Natural killer cell (primary cell): ENCODE measurements at regions of chr1 and their contacts with region 1.

Region 1: DNA sequence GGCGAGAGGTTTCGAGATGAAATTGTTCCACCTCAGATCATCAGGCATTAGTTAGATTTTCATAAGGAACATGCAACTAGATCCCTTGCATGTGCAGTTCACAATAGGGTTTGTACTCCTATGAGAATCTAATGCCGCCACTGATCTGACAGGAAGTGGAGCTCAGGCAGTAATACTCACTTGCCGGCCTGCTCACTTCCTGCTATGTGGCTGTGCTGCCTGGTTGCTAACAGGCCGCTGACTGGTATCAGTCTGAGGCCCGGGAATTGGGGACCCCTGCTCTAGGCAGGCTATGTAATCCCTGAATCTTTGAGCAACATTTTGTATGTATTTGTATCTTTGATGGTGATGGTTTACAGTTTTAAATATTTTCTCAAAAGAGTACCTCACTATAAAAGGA is 32.5 kb downstream of the XKR8 start:
- DNase-seq: peak; percentile 39 to 78
- ATAC-seq: peak; percentile 75 to 82 (median 79)
- H3K4me3 ChIP-seq: no peak overlapping the region
- H3K4me3 Mint-ChIP-seq: peak overlapping the region; percentile 82
- H3K27ac ChIP-seq: peak overlapping the region; percentile 81
- H3K27ac Mint-ChIP-seq: peak overlapping the region; percentile 88 to 96
- H3K4me1 ChIP-seq: peaks cover 21% of the 10 kb centered on the region
- H3K4me1 Mint-ChIP-seq: peaks cover 42 to 43% of the 10 kb centered on the region in 2 donors
- H3K27me3 ChIP-seq: no peaks in the 10 kb centered on the region
- H3K27me3 Mint-ChIP-seq: no peaks in the 10 kb centered on the region
- CTCF ChIP-seq: no peak

Region 2: DNA sequence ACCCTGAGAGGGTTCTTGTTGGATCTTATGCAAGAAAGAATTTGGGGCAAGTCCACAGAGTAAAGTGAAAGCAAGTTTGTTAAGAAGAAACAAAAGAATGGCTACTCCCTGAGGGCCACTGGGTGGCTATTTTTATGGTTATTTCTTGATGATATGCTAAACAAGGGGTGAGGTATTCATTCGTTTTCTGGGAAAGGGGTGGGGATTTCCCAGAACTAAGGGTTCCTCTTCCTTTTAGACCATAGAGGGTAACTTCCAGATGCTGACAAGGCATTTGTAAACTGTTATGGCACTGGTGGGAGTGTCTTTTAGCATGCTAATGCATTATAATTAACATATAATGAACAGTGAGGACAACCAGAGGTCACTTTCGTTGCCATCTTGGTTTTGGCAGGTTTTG is 302.1 kb before region 1 on chr1:
- intact Hi-C with region 1: no loop called
- DNase-seq: no peak
- ATAC-seq: no peak
- H3K4me3 ChIP-seq: no peak overlapping the region
- H3K4me3 Mint-ChIP-seq: no peak overlapping the region
- H3K27ac ChIP-seq: no peak overlapping the region
- H3K27ac Mint-ChIP-seq: no peak overlapping the region
- H3K4me1 ChIP-seq: no peaks in the 10 kb centered on the region
- H3K4me1 Mint-ChIP-seq: no peaks in the 10 kb centered on the region
- H3K27me3 ChIP-seq: no peaks in the 10 kb centered on the region
- H3K27me3 Mint-ChIP-seq: peaks cover 11 to 14% of the 10 kb centered on the region in 2 donors
- CTCF ChIP-seq: no peak

Region 3: DNA sequence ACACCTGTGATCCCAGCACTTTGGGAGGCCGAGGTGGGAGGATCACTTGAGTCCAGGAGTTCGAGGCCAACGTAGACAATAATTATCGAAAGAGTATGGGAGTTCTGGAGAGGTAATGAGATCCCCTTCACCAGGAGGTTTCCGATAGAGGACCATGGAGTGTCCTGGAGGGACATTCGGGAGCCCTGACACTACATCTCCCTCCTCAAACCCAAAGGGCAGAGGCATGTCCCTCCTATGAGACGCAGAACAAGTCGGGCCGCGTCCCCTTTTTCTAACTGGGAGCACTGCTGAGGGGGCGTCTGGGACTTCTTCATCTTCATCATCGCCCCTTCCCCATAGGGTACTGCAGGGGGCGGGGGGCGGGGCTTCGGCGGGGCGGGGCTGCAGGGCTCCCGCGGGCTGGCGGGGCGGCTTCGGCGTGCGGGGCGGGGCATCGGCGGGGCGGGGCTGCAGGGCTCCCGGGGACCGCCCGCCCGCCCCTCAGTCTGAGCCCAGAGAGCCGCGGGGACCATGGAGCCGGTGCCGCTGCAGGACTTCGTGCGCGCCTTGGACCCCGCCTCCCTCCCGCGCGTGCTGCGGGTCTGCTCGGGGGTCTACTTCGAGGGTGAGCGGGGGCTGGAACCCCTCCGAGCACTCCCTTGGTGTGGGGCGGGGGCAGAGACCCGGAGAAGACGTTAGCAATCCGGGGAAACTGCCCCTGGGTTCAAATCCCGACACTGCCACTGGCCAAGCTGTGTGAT is 120.0 kb before region 1 on chr1 and contains the start of gene THEMIS2:
- intact Hi-C with region 1: loop called (anchors 5 kb)
- DNase-seq: peak; percentile 70 to 84
- ATAC-seq: peak; percentile 66 to 83 (median 75)
- H3K4me3 ChIP-seq: peak within 1 kb of the TSS; percentile 92
- H3K4me3 Mint-ChIP-seq: peak within 1 kb of the TSS; percentile 94
- H3K27ac ChIP-seq: peak within 1 kb of the TSS; percentile 91
- H3K27ac Mint-ChIP-seq: peak within 1 kb of the TSS; percentile 91 to 95
- H3K4me1 ChIP-seq: peaks cover 78% of the 10 kb centered on the region
- H3K4me1 Mint-ChIP-seq: peaks cover 36 to 61% of the 10 kb centered on the region in 2 donors
- H3K27me3 ChIP-seq: no peaks in the 10 kb centered on the region
- H3K27me3 Mint-ChIP-seq: no peaks in the 10 kb centered on the region
- CTCF ChIP-seq: no peak
- total RNA-seq, gene THEMIS2: 104 to 234 (median 122) TPM

Region 4: GRCh38 chr1:27884006-27884954 is 108.0 kb before region 1 on chr1:
- intact Hi-C with region 1: no loop called
- DNase-seq: peak; percentile 33 to 57
- ATAC-seq: peak; percentile 72 to 90 (median 85)
- H3K4me3 ChIP-seq: no peak overlapping the region
- H3K4me3 Mint-ChIP-seq: peak overlapping the region; percentile 80
- H3K27ac ChIP-seq: peak overlapping the region; percentile 85
- H3K27ac Mint-ChIP-seq: peak overlapping the region; percentile 96 to 99
- H3K4me1 ChIP-seq: peaks cover 85% of the 10 kb centered on the region
- H3K4me1 Mint-ChIP-seq: peaks cover 53 to 64% of the 10 kb centered on the region in 2 donors
- H3K27me3 ChIP-seq: no peaks in the 10 kb centered on the region
- H3K27me3 Mint-ChIP-seq: no peaks in the 10 kb centered on the region
- CTCF ChIP-seq: no peak

Region 5: DNA sequence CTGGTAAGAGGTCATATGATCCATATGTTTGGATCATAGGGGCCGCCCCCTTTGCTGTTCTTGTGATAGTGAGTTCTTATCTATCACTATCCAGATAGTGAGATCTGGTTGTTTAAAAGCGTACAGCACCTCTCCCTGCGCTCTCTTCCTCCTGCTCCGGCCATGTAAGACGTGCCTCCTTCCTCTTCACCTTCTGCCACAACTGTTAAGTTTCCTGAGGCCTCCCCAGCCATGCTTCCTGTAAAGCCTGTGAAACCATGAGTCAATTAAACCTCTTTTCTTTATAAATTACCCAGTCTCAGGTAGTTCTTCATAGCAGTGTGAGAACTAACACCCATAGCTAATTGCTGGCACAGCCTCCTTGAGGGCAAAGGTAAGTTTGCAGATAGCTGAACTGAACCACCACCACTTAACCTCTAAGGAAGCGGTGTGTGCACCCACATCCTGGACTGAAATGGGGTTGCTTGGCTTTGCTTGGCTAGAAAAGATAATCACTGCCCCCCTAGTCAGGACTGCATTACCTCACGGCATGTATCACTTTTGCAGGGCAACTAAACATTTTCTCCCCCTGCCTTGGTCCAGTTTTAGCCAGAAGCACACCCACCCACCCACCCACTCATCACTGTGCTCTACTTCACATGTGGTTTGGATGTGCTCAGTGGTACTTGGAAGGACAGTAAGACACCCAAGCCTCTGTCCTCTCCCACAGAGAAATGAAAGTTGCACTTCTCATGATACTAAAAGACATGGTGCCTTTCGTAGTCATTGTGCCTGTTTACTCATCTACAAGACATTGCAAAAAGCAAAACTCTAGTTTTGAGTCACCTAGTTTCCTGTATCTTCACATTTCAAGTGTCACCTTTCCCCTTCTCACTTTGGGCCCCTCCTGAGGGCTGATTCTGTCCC is 207.3 kb after region 1 on chr1:
- intact Hi-C with region 1: loop called (anchors 5 kb)
- DNase-seq: peak; percentile 77 to 84
- ATAC-seq: peak; percentile 76 to 89 (median 88)
- H3K4me3 ChIP-seq: no peak overlapping the region
- H3K4me3 Mint-ChIP-seq: peak overlapping the region; percentile 85
- H3K27ac ChIP-seq: peak overlapping the region; percentile 74
- H3K27ac Mint-ChIP-seq: peak overlapping the region; percentile 80 to 88
- H3K4me1 ChIP-seq: peaks cover 68% of the 10 kb centered on the region
- H3K4me1 Mint-ChIP-seq: peaks cover 54 to 67% of the 10 kb centered on the region in 2 donors
- H3K27me3 ChIP-seq: no peaks in the 10 kb centered on the region
- H3K27me3 Mint-ChIP-seq: no peaks in the 10 kb centered on the region
- CTCF ChIP-seq: no peak